ENCODE measurements at regions of chr7 and their contacts with region 1.

Region 1: GRCh38 chr7:107879400-107880035 is 11.5 kb upstream of the DLD start:
- DNase-seq: peak in 1 of 10 donors; percentile 61
- H3K4me3 ChIP-seq: no peak overlapping the region
- H3K27ac ChIP-seq: no peak overlapping the region
- H3K27me3 ChIP-seq: no peaks in the 10 kb centered on the region
- CTCF ChIP-seq: peak; percentile 55 to 85 (median 72)

Region 2: DNA sequence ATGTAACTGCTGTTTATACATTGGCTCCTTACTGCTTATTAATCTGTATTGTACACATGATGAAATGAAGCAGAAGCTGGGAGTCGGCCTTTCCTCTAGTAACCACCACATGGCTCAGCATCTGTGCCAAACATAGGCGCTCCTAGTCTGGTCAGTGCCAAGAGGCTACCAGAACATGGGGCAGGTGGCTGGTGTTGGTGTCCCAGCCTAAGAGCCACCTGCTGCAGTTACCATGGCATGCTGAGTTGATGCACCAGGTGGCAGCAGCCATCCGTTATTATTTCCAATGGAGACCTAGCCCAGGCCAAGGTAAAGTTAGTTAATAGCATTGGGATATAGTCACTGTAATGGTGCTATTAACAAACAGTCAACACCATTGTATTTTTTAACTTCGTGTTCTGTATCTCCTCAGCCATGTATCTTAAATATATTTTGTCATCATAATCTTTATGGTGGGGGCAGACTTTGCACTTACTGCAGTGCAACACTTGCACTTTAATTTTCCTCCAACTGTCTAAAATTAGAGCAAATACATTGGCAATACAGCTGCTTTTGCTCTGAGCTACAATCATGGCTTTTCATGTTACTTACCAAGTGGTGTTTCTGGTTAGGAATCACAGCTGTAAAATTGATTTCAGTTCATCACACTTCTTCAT is 677.6 kb before region 1 on chr7:
- intact Hi-C with region 1: loop called in 1 of 2 experiments (anchors 10 kb)
- DNase-seq: peak; percentile 14 to 92 (median 60)
- H3K4me3 ChIP-seq: no peak overlapping the region
- H3K27ac ChIP-seq: peak overlapping the region in 41 of 59 donors; percentile 0 to 79 (median 25)
- H3K27me3 ChIP-seq: no peaks in the 10 kb centered on the region
- CTCF ChIP-seq: peak; percentile 22 to 69 (median 55)

Region 3: DNA sequence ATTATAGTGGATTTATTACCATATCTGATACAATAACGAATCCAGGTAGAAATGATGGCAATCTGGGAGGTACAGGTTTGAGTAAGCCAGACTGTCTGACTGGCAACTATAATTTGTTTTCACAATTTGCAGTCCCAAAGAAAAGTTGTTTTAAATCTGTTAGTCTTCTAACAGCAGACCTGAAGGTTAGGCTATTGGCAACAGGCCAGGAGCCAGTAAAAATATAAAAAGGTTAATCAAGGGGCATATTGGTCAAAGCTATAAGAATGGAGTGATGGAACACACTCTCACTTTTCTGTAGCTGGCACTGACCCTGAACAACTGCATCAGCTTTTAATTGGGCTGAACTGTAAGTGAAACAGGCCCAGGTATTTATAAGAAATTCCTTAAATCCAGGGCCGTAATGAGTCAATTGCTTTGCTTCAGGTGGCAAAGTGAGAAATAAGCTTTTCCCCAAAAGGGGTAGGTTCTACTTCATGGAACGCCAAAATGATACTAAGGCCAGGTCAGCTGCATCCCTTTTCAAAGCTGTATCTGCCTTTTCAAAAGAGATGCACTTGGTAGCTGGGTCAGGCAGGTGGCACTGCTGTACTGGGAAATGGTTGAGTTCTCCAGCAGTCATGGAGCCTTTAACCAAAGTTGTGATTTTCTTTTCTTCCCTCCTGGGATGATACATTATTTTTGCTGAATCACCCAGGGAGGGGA is 416.6 kb before region 1 on chr7:
- intact Hi-C with region 1: loop called in 1 of 2 experiments (anchors 5 kb)
- DNase-seq: peak in 9 of 10 donors; percentile 38 to 69 (median 59)
- H3K4me3 ChIP-seq: no peak overlapping the region
- H3K27ac ChIP-seq: peak overlapping the region in 14 of 59 donors; percentile 1 to 63 (median 32)
- H3K27me3 ChIP-seq: no peaks in the 10 kb centered on the region
- CTCF ChIP-seq: peak; percentile 34 to 89 (median 72)

Region 4: DNA sequence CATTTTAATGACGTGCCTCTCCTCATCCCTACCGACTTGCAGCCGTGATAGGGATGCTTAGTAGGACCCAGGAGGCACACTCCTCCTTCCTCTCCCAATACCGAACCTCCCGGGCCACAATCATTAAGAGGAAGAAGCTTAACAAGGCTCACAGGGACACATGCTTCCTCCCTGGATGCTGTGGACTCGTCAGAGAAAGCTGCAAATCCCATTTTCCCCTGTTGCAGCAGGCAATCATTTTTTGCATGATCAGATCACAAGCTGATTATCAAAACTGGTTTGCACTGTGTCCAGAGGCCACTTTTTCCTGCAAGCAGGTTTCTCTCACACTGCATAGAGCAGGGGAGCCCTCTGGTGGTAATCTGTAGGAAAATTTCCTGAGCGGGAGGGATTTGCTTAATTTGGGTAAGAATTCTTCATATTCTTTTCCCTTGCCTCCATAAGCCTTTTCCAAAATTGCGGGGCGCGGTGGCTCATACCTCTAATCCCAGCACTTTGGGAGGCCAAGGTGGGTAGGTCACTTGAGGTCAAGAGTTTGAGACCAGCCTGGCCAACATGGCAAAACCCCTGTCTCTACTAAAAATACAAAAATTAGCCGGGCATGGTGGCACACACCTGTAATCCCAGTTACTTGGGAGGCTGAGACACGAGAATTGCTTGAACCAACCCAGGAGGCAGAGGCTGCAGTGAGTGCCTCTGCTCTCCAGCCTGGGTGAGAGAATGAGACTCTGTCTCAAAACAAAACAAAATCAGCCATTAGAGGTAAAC is 266.7 kb after region 1 on chr7:
- intact Hi-C with region 1: loop called in 1 of 2 experiments (anchors 5 kb)
- DNase-seq: peak in 8 of 10 donors; percentile 45 to 75 (median 56)
- H3K4me3 ChIP-seq: peak overlapping the region in 52 of 59 donors; percentile 16 to 61 (median 38)
- H3K27ac ChIP-seq: peak overlapping the region in 29 of 59 donors; percentile 1 to 79 (median 29)
- H3K27me3 ChIP-seq: no peaks in the 10 kb centered on the region
- CTCF ChIP-seq: peak; percentile 62 to 91 (median 83)

Measured in dorsolateral prefrontal cortex (tissue), 120 donors.